ENCODE measurements at regions of chr22 and their contacts with region 1.

Region 1: GRCh38 chr22:29031227-29032011 is 30.2 kb downstream of the C22orf31 start:
- DNase-seq: no peak
- ATAC-seq: peak; percentile 69
- H3K4me3 ChIP-seq: no peak overlapping the region
- H3K27ac ChIP-seq: no peak overlapping the region
- H3K4me1 ChIP-seq: no peaks in the 10 kb centered on the region
- H3K27me3 ChIP-seq: 0 out of 4 replicates have a peak, but pooled peaks cover 0 to 6% of the 10 kb centered on the region in 2 experiments
- CTCF ChIP-seq: no peak
- EP300 ChIP-seq: no peak
- POLR2A ChIP-seq: no peak
- RAD21 ChIP-seq: no peak

Region 2: DNA sequence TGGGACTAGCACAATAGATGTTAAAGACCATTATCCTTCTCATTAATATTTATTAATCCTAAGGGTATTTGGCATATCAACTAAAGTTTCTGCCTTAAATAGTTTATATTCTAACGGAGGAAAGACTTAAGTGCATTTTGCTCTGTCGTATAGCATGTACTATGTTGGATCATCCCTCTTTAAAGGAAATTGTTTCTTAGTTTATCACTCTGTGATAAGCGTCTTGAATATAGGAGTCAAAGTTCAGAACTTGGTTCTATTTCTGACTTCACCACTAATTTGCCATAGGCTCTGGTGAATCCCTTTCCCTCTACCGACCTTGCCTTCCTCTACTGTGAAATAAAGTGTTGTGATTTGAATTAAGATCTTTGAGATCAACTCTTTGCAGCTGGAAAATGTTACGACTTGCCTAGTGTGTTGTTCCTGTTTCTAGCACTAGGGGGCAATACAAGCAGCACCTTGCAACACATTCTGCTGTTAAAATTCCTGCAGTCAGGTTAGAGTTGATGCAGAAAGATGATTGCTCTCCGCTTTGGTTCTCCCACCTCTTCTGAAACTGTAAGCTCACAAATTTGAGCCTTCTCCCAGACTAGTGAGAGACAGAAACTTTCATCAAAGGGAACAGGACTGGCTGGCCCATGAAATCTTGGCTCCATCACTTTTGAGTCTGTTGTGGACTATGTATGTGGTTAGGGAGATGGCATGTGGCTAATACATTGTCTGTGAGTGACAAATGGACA is 175.9 kb before region 1 on chr22:
- CTCF ChIA-PET with region 1: interaction called, 195 read pairs
- POLR2A ChIA-PET with region 1: no interaction called
- RAD21 ChIA-PET with region 1: interaction called, 11 read pairs
- SMC1A ChIA-PET with region 1: interaction called, 187 read pairs
- in situ Hi-C with region 1: loop called (anchors 5 kb)
- intact Hi-C with region 1: no loop called
- DNase-seq: peak; percentile 27
- ATAC-seq: peak; percentile 79
- H3K4me3 ChIP-seq: no peak overlapping the region
- H3K27ac ChIP-seq: no peak overlapping the region
- H3K4me1 ChIP-seq: no peaks in the 10 kb centered on the region
- H3K27me3 ChIP-seq: no peaks in the 10 kb centered on the region; a peak in 1 of 4 replicates
- CTCF ChIP-seq: peak; percentile 85 to 90 (median 87); a peak in 5 of 6 replicates
- EP300 ChIP-seq: no peak
- POLR2A ChIP-seq: no peak
- RAD21 ChIP-seq: peak; percentile 94

Region 3: DNA sequence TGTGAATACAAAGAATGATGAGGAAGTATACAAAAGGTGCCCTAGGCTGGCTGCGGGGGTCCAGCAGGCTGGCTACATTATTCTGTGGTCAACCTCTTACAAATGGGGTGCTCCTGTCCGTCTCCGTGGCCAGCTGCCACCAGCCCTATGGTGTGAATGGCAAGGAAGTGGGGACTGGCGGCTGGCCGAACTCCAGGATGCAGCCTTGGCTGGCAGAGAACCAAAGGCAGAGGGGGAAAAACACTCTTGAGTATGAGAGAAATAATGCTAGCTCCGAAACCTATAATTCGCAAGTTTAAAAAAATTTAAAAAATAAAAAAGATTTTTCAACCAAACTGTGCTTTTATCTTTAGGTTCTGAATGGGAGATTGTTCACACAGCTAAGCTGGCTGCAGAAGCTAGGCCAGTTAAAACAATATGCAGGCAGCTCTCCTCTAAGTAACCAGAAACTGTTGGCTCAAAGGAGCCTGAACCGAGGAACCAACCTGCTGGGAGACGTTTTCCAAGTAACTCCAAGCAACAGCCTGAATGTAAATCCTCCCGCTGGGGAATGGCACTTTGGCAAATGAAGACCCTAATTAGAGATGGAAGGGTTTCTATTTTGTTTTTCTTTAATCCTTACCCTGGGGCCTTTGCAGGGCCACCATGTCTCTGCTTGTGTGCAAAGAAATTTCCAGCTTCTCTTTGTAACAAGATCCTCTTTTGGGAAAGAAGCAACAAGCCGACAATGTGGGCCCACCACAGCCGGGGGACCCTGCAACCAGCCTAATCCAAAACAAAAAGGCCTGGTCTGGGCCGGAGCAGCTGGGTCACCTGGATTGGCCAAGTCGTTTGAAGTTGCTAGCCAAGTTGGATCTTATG is 19.9 kb before region 1 on chr22:
- CTCF ChIA-PET with region 1: interaction called, 35 read pairs
- POLR2A ChIA-PET with region 1: interaction called, 27 read pairs
- RAD21 ChIA-PET with region 1: interaction called, 20 read pairs
- SMC1A ChIA-PET with region 1: interaction called, 44 read pairs
- in situ Hi-C with region 1: no loop called
- intact Hi-C with region 1: no loop called
- DNase-seq: no peak
- ATAC-seq: no peak
- H3K4me3 ChIP-seq: no peak overlapping the region
- H3K27ac ChIP-seq: no peak overlapping the region
- H3K4me1 ChIP-seq: no peaks in the 10 kb centered on the region
- H3K27me3 ChIP-seq: 0 out of 4 replicates have a peak, but pooled peaks cover 0 to 2% of the 10 kb centered on the region in 2 experiments
- CTCF ChIP-seq: no peak
- EP300 ChIP-seq: no peak
- POLR2A ChIP-seq: no peak
- RAD21 ChIP-seq: no peak

Region 4: GRCh38 chr22:29195964-29196666 is 164.7 kb after region 1 on chr22:
- CTCF ChIA-PET with region 1: no interaction called
- POLR2A ChIA-PET with region 1: no interaction called
- RAD21 ChIA-PET with region 1: no interaction called
- SMC1A ChIA-PET with region 1: no interaction called
- in situ Hi-C with region 1: no loop called
- intact Hi-C with region 1: no loop called
- DNase-seq: no peak
- ATAC-seq: no peak
- H3K4me3 ChIP-seq: no peak overlapping the region
- H3K27ac ChIP-seq: no peak overlapping the region
- H3K4me1 ChIP-seq: peaks cover 6% of the 10 kb centered on the region
- H3K27me3 ChIP-seq: no peaks in the 10 kb centered on the region
- CTCF ChIP-seq: no peak
- EP300 ChIP-seq: no peak
- POLR2A ChIP-seq: no peak
- RAD21 ChIP-seq: no peak

Measured in GM12878 (cell line).